Left ventricle myocardium superior (tissue), 1 donor: ENCODE measurements at regions of chr20 and their contacts with region 1.

Region 1: GRCh38 chr20:62603021-62603906 is 39.0 kb upstream of the SLCO4A1 start:
- DNase-seq: peak; percentile 63
- ATAC-seq: peak; percentile 74

Region 2: GRCh38 chr20:62427172-62428001 is 175.9 kb before region 1 on chr20 and contains the start of gene RBBP8NL:
- intact Hi-C with region 1: loop called (anchors 10 kb)
- DNase-seq: no peak
- ATAC-seq: no peak
- total RNA-seq, gene RBBP8NL: not detected

Region 3: GRCh38 chr20:62475027-62475771 is 128.1 kb before region 1 on chr20:
- intact Hi-C with region 1: no loop called
- DNase-seq: no peak
- ATAC-seq: peak; percentile 13

Region 4: GRCh38 chr20:62550087-62550632 is 53.1 kb before region 1 on chr20:
- intact Hi-C with region 1: no loop called
- DNase-seq: peak; percentile 93
- ATAC-seq: peak; percentile 83

Region 5: DNA sequence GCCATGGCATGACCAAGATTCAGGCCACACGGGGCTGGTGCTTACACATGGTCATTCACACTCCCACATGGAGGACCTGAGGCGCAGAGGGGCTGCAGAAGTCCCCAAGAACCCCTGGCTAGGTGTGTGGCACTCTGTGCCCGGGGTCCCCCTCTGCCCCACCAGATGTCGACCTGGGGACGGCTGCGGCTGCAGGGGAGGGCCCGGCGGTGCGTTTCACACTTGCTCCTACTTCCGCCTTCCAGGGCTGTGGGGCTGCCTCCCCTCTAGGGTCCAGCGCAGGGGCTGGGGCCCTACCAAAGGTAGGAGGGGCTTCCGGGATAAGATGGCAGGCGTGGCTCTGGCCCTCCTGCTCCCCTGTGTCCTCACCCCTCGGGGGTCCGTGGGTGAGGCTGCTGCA is 42.1 kb before region 1 on chr20:
- intact Hi-C with region 1: no loop called
- DNase-seq: no peak
- ATAC-seq: no peak

Region 6: DNA sequence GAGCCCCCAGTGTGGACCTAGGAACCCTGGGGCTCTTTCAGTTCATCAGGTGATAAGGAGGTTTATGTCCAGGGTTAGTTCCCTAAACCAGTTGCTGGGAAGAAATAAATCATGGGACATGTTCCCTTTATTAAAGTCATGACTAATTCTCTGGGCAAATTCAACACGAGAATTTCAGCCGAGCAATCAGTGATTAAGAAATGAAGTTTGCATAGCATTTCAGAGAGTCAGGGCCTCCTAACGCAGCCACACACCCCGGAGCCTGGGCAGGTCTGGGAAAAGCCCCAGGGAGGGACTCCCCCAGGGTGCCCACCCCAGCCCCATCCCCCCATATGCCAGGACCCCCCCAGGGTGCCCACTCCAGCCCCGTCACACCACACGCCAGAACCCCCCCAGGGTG is 59.2 kb after region 1 on chr20:
- intact Hi-C with region 1: no loop called
- DNase-seq: no peak
- ATAC-seq: no peak